Activated T-helper 1 cell treated with anti-CD3 and anti-CD28 coated beads, Interleukin-12 subunit alpha, Interleukin-12 subunit beta, Interleukin-2, Interleukin-4 antibody, amounts not matched to agents 30 ng/mL and 10 ng/mL and 1 ng/mL, durations not matched to agents 14 hours and 24 hours and 36 hours (primary cell): ENCODE measurements at regions of chr1 and their contacts with region 1.

Region 1: GRCh38 chr1:55089683-55090082 is 50.3 kb downstream of the PCSK9 start:
- DNase-seq: no peak
- H3K4me3 Mint-ChIP-seq: no peak overlapping the region
- H3K27ac Mint-ChIP-seq: no peak overlapping the region
- H3K4me1 Mint-ChIP-seq: peaks cover 13% of the 10 kb centered on the region
- H3K27me3 Mint-ChIP-seq: no peaks in the 10 kb centered on the region

Region 2: DNA sequence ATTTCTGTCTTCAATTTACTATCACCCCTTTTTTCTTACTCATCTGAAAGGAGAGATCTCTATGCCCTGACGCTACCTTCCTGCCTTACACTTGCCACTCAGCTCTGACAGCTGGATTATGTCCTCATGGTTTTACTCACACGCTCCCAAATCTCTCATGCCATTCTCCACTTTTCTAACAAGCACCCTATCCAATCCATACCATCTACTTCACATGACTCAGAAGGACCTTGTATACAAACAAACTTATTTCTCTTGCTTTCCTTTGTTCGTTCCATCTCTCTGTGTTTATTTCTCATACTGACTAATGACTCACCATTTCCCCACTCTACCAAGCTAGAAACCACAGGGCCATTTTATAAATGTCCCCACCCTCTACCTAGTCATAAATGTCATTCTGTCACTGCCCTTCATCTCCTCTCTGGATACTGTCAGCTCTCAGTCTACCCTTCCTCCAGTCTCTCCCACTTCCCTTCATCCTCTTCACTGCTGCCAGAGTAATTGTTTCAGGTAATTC is 38.2 kb after region 1 on chr1:
- intact Hi-C with region 1: loop called (anchors 5 kb)
- DNase-seq: no peak
- H3K4me3 Mint-ChIP-seq: peak overlapping the region; percentile 8
- H3K27ac Mint-ChIP-seq: peak overlapping the region; percentile 69
- H3K4me1 Mint-ChIP-seq: peaks cover 31% of the 10 kb centered on the region
- H3K27me3 Mint-ChIP-seq: no peaks in the 10 kb centered on the region